A549 (cell line): ENCODE measurements at regions of chr5 and their contacts with region 1.

Region 1: DNA sequence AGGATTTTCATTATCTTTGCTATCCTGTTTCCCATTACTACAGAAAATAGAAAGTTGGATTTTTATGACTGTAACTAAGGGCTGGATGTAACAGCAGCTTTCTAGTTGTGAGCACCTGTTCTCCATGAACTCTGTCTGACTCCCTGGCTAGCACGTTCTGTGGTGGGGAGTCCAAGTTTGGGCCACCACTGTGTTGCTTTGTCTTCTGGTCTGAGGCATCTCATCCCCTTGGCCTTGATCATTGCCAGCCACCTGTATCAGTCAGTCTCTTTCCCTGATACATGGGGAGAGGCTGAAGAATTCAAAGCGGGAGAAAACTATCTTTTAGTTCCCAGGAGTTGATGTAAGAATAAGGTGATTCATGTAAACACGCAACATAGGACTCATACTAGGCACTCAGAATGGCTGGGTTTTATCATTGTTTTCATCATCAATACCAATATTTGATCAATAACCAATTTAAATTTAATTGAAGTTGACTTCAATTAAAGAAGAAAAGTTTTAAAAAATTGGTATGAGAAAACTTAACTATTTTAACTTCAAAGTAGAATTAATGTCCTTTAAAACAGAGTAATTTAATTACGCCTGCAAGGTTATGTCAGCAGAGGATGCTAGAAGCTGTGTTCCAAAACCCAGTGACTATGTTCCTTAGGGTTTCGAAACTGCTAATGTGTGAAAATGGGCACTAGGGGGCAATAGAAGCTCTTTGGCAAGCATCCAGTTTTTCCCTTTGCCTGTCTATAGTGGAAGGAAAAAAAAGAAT is 33.6 kb downstream of the WDR70 start:
- DNase-seq: peak; percentile 83 to 88
- ATAC-seq: peak; percentile 95 to 97
- H3K4me3 ChIP-seq: no peak overlapping the region
- H3K27ac ChIP-seq: no peak overlapping the region
- H3K4me1 ChIP-seq: no peaks in the 10 kb centered on the region
- CTCF ChIP-seq: peak; percentile 99
- EP300 ChIP-seq: no peak
- POLR2A ChIP-seq: no peak
- RAD21 ChIP-seq: peak; percentile 93 to 94

Region 2: GRCh38 chr5:36842087-36842486 is 570.6 kb before region 1 on chr5:
- CTCF ChIA-PET with region 1: no interaction called
- POLR2A ChIA-PET with region 1: no interaction called
- DNase-seq: no peak
- ATAC-seq: no peak
- H3K4me3 ChIP-seq: no peak overlapping the region
- H3K27ac ChIP-seq: no peak overlapping the region
- H3K4me1 ChIP-seq: no peaks in the 10 kb centered on the region
- CTCF ChIP-seq: no peak
- EP300 ChIP-seq: no peak
- POLR2A ChIP-seq: no peak
- RAD21 ChIP-seq: no peak

Region 3: DNA sequence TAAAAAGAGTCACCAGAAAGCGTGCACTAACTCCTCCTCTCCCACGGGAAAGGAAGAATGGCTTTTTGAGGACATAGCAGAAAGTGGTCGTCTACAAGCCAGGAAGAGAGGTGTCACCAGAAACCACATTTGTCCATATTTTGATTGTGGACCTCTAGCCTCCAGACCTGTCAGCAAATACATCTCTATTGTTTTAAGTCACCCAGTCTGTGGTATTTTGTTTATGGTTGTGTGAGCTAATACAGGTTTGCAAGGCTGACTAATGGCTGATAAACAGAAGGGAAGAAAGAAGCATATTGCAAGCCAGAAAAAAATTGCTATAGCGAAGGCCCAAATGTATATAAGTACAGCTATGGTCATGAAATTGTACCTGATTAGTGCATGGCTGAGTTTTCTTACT is 12.2 kb before region 1 on chr5:
- CTCF ChIA-PET with region 1: interaction called, 23 read pairs
- POLR2A ChIA-PET with region 1: no interaction called
- DNase-seq: no peak
- ATAC-seq: no peak
- H3K4me3 ChIP-seq: no peak overlapping the region
- H3K27ac ChIP-seq: no peak overlapping the region
- H3K4me1 ChIP-seq: no peaks in the 10 kb centered on the region
- CTCF ChIP-seq: no peak
- EP300 ChIP-seq: no peak
- POLR2A ChIP-seq: no peak
- RAD21 ChIP-seq: no peak

Region 4: DNA sequence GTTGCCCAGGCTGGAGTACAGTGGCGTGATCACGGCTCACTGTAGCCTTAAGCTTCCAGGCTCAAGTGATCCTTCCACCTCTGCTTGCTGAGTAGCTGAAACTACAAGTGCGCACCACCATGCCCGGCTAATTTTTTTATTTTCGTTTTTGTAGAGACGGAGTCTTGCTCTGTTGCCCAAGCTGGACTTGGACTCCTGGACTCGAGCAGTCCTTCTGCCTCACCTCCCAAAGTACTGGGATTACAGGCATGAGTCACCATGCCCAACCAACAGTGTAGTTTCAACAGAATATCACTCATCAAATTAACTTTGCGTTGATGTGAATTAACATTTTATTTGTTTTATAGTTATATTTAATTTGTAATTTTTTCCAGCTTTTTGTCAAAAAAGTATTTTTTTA is 11.7 kb after region 1 on chr5:
- CTCF ChIA-PET with region 1: interaction called, 11 read pairs
- POLR2A ChIA-PET with region 1: no interaction called
- DNase-seq: no peak
- ATAC-seq: no peak
- H3K4me3 ChIP-seq: no peak overlapping the region
- H3K27ac ChIP-seq: no peak overlapping the region
- H3K4me1 ChIP-seq: no peaks in the 10 kb centered on the region
- CTCF ChIP-seq: no peak
- EP300 ChIP-seq: no peak
- POLR2A ChIP-seq: no peak
- RAD21 ChIP-seq: no peak